Panc1 (cell line): ENCODE measurements at regions of chr12 and their contacts with region 1.

Region 1: DNA sequence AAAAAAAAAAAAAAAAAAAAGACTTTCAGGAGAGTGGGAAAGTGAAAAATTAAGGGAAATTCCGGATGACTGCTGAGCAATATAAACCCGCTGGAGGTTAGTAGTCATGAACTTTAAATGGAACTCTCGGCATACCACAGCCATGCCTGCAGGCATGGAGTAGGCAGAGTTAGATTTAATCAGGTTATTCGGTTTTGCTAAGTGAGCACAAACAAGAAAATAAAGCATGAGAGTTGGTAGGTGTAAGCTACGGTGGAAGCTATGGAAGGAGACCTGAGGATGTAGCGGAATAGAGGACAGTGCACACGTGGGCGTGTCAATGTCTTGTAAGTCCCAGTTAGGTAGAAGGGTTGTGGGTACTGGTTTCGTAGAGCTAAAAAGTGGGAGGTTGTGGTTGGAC is 11.8 kb upstream of the TUBA1C start:
- DNase-seq: no peak
- ATAC-seq: peak; percentile 82
- H3K4me3 ChIP-seq: no peak overlapping the region
- H3K27ac ChIP-seq: no peak overlapping the region
- H3K4me1 ChIP-seq: no peaks in the 10 kb centered on the region
- H3K27me3 ChIP-seq: no peaks in the 10 kb centered on the region
- CTCF ChIP-seq: no peak

Region 2: DNA sequence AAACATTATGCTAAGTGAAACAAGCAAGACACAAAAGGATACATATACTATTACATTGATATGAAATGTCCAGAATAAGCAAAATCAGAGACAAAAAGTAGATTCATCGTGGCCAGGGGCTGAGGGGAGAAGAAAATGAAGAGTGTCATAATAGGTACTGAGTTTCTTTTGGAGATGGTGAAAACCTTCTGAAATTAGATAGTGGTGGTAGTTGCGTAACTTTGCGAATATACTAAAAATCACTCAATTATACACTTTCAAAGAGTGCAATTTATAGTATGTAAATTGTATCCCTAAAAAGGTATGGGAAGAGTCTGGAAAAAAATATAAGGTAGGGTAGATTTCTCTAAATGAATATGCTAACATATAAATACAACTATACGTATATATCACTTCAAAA is 593.2 kb before region 1 on chr12:
- CTCF ChIA-PET with region 1: no interaction called
- POLR2A ChIA-PET with region 1: no interaction called
- in situ Hi-C with region 1: no loop called
- intact Hi-C with region 1: no loop called
- DNase-seq: no peak
- ATAC-seq: no peak
- H3K4me3 ChIP-seq: no peak overlapping the region
- H3K27ac ChIP-seq: no peak overlapping the region
- H3K4me1 ChIP-seq: no peaks in the 10 kb centered on the region
- H3K27me3 ChIP-seq: no peaks in the 10 kb centered on the region
- CTCF ChIP-seq: no peak

Region 3: DNA sequence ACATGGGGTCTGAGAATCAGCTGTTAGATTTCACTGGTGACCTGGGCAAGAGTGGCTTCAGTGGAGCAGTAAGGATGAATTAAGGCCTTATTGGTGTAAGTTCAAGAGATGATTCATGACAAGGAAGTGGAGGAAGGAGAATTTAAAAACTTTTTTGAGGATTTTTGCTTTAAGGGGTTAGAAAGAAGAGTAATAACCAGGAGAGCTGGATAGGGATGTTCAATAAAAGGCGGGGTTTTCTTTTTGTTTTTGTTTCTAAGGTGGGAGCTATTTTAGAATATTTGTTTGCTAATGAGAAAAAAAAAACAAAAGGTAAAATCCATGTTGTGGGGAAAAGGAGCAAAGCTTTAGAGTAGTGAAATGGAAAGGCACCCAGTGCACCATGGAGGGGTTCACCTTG is 106.7 kb before region 1 on chr12:
- CTCF ChIA-PET with region 1: interaction called, 3 read pairs
- POLR2A ChIA-PET with region 1: interaction called, 14 read pairs
- in situ Hi-C with region 1: no loop called
- intact Hi-C with region 1: no loop called
- DNase-seq: no peak
- ATAC-seq: no peak
- H3K4me3 ChIP-seq: no peak overlapping the region
- H3K27ac ChIP-seq: no peak overlapping the region
- H3K4me1 ChIP-seq: no peaks in the 10 kb centered on the region
- H3K27me3 ChIP-seq: no peaks in the 10 kb centered on the region
- CTCF ChIP-seq: no peak

Region 4: DNA sequence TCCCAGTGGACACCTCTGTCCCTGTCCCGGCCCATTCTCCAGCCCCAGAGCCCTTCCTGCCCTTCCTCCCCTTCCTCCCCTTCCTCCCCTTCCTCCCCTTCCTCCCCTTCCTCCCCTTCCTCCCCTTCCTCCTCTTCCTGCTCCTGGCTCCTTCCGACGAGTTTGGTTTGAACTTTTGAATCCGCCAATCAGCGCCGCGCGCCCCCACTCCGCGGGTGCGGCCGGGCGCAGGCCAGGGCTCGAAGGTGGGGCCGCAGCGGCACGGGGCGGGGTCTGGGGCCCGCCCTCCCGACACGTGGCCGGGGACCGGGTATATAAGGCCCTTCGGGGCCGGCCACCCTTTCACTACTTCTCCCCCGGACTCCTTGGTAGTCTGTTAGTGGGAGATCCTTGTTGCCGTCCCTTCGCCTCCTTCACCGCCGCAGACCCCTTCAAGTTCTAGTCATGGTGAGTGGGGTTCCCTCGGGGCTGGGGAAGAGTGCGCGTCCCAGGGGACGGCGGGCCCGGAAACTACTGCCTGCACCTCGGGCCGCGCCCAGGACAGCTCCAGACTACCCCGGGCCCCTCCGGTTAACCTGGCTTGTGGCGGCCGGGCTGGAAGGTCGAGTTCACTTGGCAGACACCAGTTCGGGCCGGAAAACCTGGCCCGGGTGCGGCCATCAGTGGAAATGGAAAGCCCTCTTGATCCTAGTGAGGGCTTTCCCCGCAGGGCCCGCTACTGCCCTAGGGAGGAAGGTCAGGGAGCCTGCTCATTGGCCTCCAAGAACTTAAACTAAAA is 11.8 kb after region 1 on chr12 and contains the start of gene TUBA1C:
- CTCF ChIA-PET with region 1: no interaction called
- POLR2A ChIA-PET with region 1: no interaction called
- in situ Hi-C with region 1: no loop called
- intact Hi-C with region 1: no loop called
- DNase-seq: peak; percentile 72
- ATAC-seq: peak; percentile 91
- H3K4me3 ChIP-seq: peak within 1 kb of the TSS; percentile 87 to 91
- H3K27ac ChIP-seq: peak within 1 kb of the TSS; percentile 97
- H3K4me1 ChIP-seq: peaks cover 21% of the 10 kb centered on the region
- H3K27me3 ChIP-seq: no peaks in the 10 kb centered on the region
- CTCF ChIP-seq: no peak
- total RNA-seq, gene TUBA1C: 524 TPM

Region 5: GRCh38 chr12:49451468-49452259 is 198.6 kb after region 1 on chr12:
- CTCF ChIA-PET with region 1: no interaction called
- POLR2A ChIA-PET with region 1: no interaction called
- in situ Hi-C with region 1: no loop called
- intact Hi-C with region 1: no loop called
- DNase-seq: no peak
- ATAC-seq: no peak
- H3K4me3 ChIP-seq: no peak overlapping the region
- H3K27ac ChIP-seq: no peak overlapping the region
- H3K4me1 ChIP-seq: no peaks in the 10 kb centered on the region
- H3K27me3 ChIP-seq: no peaks in the 10 kb centered on the region
- CTCF ChIP-seq: no peak